Activated CD4-positive, alpha-beta memory T cell treated with anti-CD3 and anti-CD28 coated beads for 36 hours (primary cell): ENCODE measurements at regions of chr12 and their contacts with region 1.

Region 1: GRCh38 chr12:7142056-7142644 is 12.0 kb downstream of the CLSTN3 start:
- DNase-seq: peak; percentile 70
- H3K4me3 Mint-ChIP-seq: no peak overlapping the region
- H3K27ac Mint-ChIP-seq: no peak overlapping the region
- H3K4me1 Mint-ChIP-seq: peaks cover 6% of the 10 kb centered on the region
- H3K27me3 Mint-ChIP-seq: no peaks in the 10 kb centered on the region

Region 2: GRCh38 chr12:6355491-6356371 is 786.4 kb before region 1 on chr12:
- CTCF ChIA-PET with region 1: no interaction called
- POLR2A ChIA-PET with region 1: no interaction called
- intact Hi-C with region 1: no loop called
- DNase-seq: no peak
- H3K4me3 Mint-ChIP-seq: no peak overlapping the region
- H3K27ac Mint-ChIP-seq: no peak overlapping the region
- H3K4me1 Mint-ChIP-seq: peaks cover 7% of the 10 kb centered on the region
- H3K27me3 Mint-ChIP-seq: no peaks in the 10 kb centered on the region

Region 3: GRCh38 chr12:7162691-7163114 is 20.6 kb after region 1 on chr12:
- CTCF ChIA-PET with region 1: interaction called, 10 read pairs
- POLR2A ChIA-PET with region 1: no interaction called
- intact Hi-C with region 1: no loop called
- DNase-seq: peak; percentile 50
- H3K4me3 Mint-ChIP-seq: peak overlapping the region; percentile 7
- H3K27ac Mint-ChIP-seq: no peak overlapping the region
- H3K4me1 Mint-ChIP-seq: peaks cover 8% of the 10 kb centered on the region
- H3K27me3 Mint-ChIP-seq: peaks cover 12% of the 10 kb centered on the region

Region 4: DNA sequence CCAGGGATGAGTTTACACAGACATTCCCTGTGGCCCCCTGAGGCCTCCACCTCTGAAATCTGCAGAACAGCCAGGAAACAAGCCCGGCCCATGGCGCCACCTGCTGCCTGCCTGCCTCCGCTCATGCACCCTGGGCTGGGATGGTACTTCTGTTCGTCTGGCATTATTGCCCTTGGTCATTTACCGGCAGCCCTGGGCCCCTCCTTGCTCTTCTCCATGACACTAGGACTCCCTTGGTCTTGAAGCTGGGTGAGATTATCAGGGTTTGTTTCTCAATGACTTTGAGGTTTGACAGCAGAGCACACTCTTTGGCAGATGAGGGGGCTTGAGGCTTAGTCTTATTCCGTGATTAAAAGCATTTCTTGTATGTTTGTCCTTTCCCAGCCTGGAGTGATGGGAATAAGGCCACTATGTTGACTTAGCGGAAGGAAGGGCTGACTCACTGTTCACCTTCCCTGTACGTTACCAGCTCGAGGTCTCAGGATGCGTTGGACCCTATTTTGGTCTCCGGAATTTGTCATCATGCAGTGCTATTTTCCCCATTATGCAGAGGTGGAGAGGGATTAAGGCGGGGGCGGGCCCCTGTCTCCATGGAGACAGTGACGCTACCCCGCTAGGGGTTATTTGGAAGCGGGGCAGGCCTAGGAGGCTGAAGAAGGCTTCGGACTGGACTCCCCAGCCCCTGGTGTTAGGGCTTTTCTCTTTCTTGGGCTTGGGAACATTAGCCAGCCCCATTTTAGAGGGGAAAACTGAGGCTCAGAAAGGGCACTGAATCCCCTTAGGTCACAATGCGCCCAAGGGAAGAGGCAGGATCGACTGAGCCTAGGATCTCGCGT is 46.6 kb after region 1 on chr12:
- CTCF ChIA-PET with region 1: interaction called, 9 read pairs
- POLR2A ChIA-PET with region 1: no interaction called
- intact Hi-C with region 1: loop called (anchors 1 kb)
- DNase-seq: peak; percentile 86
- H3K4me3 Mint-ChIP-seq: peak overlapping the region; percentile 86
- H3K27ac Mint-ChIP-seq: peak overlapping the region; percentile 94
- H3K4me1 Mint-ChIP-seq: peaks cover 39% of the 10 kb centered on the region
- H3K27me3 Mint-ChIP-seq: no peaks in the 10 kb centered on the region